Dorsolateral prefrontal cortex (tissue), 120 donors: ENCODE measurements at regions of chr19 and their contacts with region 1.

Region 1: DNA sequence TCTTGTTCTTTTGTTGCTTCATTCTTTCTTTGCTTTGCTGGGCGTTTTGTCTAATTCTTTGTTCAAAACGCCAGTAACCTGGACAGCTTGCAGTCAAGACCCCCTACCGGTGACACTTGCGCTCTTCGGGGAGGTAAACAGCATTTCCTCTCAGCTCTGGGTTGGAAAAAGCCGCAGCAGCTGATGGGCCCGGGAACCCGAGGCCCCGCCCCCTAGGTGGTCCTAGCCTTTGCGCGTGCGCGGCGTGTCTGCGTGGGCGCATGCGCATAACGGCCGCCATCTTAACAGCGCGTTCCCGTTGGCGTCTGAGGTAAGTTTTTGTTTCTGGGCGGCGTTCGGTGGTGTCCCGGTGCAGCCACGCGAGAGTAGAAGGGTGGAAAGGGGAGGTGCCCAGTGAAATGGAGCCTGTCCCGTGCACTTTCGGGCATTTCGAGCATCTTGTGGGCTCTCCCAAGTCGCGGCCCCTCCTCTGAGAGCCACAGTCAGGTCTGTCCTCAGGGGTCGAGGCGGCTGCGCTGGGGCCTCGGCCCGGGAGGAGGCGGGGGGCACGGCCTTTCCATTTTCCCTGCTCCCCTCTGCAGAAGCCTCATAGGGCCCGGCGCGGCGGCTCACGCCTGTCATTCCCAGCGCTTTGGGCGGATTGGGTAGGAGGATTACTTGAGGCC is at the start of gene ZNF559:
- DNase-seq: peak; percentile 76 to 90 (median 84)
- H3K4me3 ChIP-seq: peak within 1 kb of the TSS; percentile 67 to 100 (median 89)
- H3K27ac ChIP-seq: peak within 1 kb of the TSS; percentile 52 to 96 (median 89)
- H3K27me3 ChIP-seq: no peaks in the 10 kb centered on the region
- CTCF ChIP-seq: peak in 39 of 56 donors; percentile 12 to 60 (median 31)
- total RNA-seq, gene ZNF559: 14.4 to 49.0 (median 29.6) TPM

Region 2: GRCh38 chr19:9140159-9140874 is 183.7 kb before region 1 on chr19 and contains the start of gene ZNF317:
- intact Hi-C with region 1: loop called in 1 of 2 experiments (anchors 5 kb)
- DNase-seq: peak; percentile 78 to 97 (median 91)
- H3K4me3 ChIP-seq: peak within 1 kb of the TSS; percentile 65 to 99 (median 91)
- H3K27ac ChIP-seq: peak within 1 kb of the TSS; percentile 35 to 96 (median 86)
- H3K27me3 ChIP-seq: no peaks in the 10 kb centered on the region
- CTCF ChIP-seq: peak in 34 of 56 donors; percentile 12 to 62 (median 32)
- total RNA-seq, gene ZNF317: 22.6 to 39.4 (median 30.9) TPM